Endothelial cell of umbilical vein (primary cell): ENCODE measurements at regions of chr2 and their contacts with region 1.

Region 1: GRCh38 chr2:37389989-37390765 is 45.7 kb downstream of the QPCT start:
- DNase-seq: peak; percentile 88
- H3K4me3 ChIP-seq: no peak overlapping the region
- H3K27ac ChIP-seq: peak overlapping the region; percentile 78
- H3K4me1 ChIP-seq: peaks cover 28% of the 10 kb centered on the region
- H3K27me3 ChIP-seq: no peaks in the 10 kb centered on the region
- CTCF ChIP-seq: no peak
- POLR2A ChIP-seq: peak; percentile 82

Region 2: GRCh38 chr2:36287363-36288275 is 1102.6 kb before region 1 on chr2:
- CTCF ChIA-PET with region 1: no interaction called
- POLR2A ChIA-PET with region 1: no interaction called
- dilution Hi-C with region 1: no loop called
- intact Hi-C with region 1: no loop called
- DNase-seq: peak; percentile 62
- H3K4me3 ChIP-seq: no peak overlapping the region
- H3K27ac ChIP-seq: no peak overlapping the region
- H3K4me1 ChIP-seq: peaks cover 7% of the 10 kb centered on the region
- H3K27me3 ChIP-seq: peaks cover 0 to 4% of the 10 kb centered on the region in 2 experiments
- CTCF ChIP-seq: no peak
- POLR2A ChIP-seq: no peak

Region 3: DNA sequence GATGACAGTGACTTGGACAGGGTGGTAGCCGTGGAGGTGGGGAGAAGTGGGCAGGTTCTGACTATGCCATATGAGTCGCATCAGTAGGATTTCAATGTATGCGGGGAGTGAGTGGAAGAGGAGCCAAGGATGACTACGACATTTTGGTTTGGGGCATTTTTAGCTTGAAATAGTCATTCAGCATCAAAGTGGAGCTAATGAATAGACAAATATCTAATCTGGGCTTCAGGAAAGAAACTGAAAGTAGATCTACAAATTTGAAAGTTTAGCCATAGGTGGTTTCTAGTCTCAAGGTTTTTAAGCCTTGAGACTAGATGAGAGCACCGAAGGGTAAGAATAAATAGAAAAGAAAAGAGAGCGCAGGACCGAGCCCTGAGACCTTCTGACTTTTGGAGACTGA is 850.5 kb before region 1 on chr2:
- CTCF ChIA-PET with region 1: no interaction called
- POLR2A ChIA-PET with region 1: no interaction called
- dilution Hi-C with region 1: no loop called
- intact Hi-C with region 1: no loop called
- DNase-seq: no peak
- H3K4me3 ChIP-seq: no peak overlapping the region
- H3K27ac ChIP-seq: no peak overlapping the region
- H3K4me1 ChIP-seq: peaks cover 70% of the 10 kb centered on the region
- H3K27me3 ChIP-seq: no peaks in the 10 kb centered on the region
- CTCF ChIP-seq: no peak
- POLR2A ChIP-seq: no peak

Region 4: GRCh38 chr2:37324786-37325624 is 65.2 kb before region 1 on chr2 and contains the start of gene PRKD3:
- CTCF ChIA-PET with region 1: interaction called, 6 read pairs
- POLR2A ChIA-PET with region 1: no interaction called
- dilution Hi-C with region 1: no loop called
- intact Hi-C with region 1: loop called (anchors 2 kb)
- DNase-seq: peak; percentile 72
- H3K4me3 ChIP-seq: peak within 1 kb of the TSS; percentile 97 to 99 (median 98)
- H3K27ac ChIP-seq: peak within 1 kb of the TSS; percentile 64
- H3K4me1 ChIP-seq: peaks cover 27% of the 10 kb centered on the region
- H3K27me3 ChIP-seq: no peaks in the 10 kb centered on the region
- CTCF ChIP-seq: no peak
- POLR2A ChIP-seq: no peak
- total RNA-seq, gene PRKD3: 47.3 and 48.4 TPM in 2 replicates

Region 5: DNA sequence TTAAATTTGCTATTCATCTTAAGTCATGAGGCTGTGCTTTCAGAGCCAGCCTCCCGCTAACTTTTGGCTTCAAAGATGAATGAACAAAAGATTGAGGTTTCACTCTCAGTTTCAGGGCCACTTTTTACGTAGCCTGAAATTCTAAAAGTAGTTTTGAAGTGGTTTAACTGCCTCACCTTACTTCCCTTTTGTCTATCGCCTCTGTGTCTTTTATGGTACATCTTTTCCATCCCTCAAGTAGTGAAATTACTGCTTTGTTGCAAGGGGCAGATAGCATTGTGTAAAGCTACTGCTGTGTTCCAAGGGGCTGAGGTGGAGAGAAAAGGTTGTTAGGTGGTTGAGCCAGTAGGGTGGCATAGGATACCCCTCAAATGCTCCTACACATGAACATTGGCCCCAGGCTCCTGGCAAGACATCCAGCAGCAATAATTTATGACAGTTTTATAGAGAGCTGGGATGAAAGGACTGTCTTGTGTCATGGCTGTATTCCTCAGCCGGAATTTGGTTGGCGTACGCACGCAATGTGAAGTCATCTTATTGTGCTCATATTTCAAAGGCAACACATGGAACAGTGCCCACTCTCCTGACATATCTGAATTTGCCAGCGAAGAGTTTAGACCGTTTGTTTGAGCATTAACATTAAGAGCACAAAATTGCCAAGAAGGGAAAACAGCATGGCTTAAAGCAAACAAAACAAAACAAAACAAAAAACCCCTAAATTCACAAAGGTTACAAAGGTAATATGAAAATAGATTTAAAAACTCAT is 13.6 kb before region 1 on chr2:
- CTCF ChIA-PET with region 1: interaction called, 16 read pairs
- POLR2A ChIA-PET with region 1: no interaction called
- dilution Hi-C with region 1: no loop called
- intact Hi-C with region 1: loop called (anchors 1 kb)
- DNase-seq: no peak
- H3K4me3 ChIP-seq: no peak overlapping the region
- H3K27ac ChIP-seq: no peak overlapping the region
- H3K4me1 ChIP-seq: peaks cover 14% of the 10 kb centered on the region
- H3K27me3 ChIP-seq: no peaks in the 10 kb centered on the region
- CTCF ChIP-seq: no peak
- POLR2A ChIP-seq: no peak

Region 6: GRCh38 chr2:37809525-37809924 is 419.3 kb after region 1 on chr2:
- CTCF ChIA-PET with region 1: interaction called, 12 read pairs
- POLR2A ChIA-PET with region 1: no interaction called
- dilution Hi-C with region 1: no loop called
- intact Hi-C with region 1: no loop called
- DNase-seq: peak; percentile 77
- H3K4me3 ChIP-seq: no peak overlapping the region
- H3K27ac ChIP-seq: no peak overlapping the region
- H3K4me1 ChIP-seq: peaks cover 13% of the 10 kb centered on the region
- H3K27me3 ChIP-seq: no peaks in the 10 kb centered on the region
- CTCF ChIP-seq: peak; percentile 42 to 45
- POLR2A ChIP-seq: no peak

Region 7: GRCh38 chr2:37890893-37891495 is 500.8 kb after region 1 on chr2:
- CTCF ChIA-PET with region 1: interaction called, 51 read pairs
- POLR2A ChIA-PET with region 1: no interaction called
- dilution Hi-C with region 1: no loop called
- intact Hi-C with region 1: no loop called
- DNase-seq: peak; percentile 69
- H3K4me3 ChIP-seq: no peak overlapping the region
- H3K27ac ChIP-seq: no peak overlapping the region
- H3K4me1 ChIP-seq: no peaks in the 10 kb centered on the region
- H3K27me3 ChIP-seq: no peaks in the 10 kb centered on the region
- CTCF ChIP-seq: peak; percentile 76 to 79
- POLR2A ChIP-seq: no peak

Region 8: DNA sequence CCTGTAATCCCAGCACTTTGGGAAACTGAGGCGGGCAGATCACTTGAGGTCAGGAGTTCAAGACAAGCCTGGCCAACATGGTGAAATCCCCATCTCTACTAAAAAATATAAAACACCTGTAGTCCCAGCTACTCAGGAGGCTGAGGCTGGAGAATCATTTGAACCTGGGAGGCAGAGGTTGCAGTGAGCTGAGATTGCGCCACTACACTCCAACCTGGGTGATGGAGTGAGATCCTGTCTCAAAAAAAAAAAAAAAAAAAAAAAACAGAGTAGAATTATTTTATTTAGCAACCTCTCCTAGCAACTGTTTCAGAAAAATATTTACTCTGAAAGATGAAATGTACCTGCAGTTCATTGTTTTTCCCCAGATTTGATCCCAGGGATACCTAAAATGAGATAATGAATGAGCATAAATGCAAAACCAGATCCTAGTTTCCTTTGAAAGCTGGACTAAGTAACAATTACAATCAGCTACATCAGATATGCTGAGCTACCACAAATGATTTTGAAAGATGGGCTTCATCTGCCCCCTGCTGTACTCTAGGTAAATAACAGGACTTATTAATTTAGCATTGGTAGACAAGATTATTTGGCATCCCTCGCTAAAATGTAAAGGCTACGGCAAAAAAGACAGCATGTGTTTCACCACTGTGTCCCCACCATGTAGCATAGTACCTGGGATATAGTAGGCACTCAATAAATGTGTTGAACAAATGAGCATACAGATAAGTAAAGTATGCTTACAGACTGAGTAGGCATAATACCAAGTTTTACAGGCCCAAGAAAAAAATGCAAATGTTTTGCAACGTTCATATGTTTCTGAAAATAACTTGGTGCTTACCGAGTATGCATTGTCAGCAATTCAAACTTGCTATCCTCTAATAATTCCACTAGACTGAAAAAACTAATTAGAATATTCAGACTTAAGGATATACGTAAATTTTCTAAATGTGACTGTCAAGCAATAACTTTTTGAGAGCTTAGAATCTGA is 884.4 kb after region 1 on chr2:
- CTCF ChIA-PET with region 1: interaction called, 47 read pairs
- POLR2A ChIA-PET with region 1: interaction called, 9 read pairs
- dilution Hi-C with region 1: no loop called
- intact Hi-C with region 1: loop called (anchors 5 kb)
- DNase-seq: peak; percentile 77
- H3K4me3 ChIP-seq: no peak overlapping the region
- H3K27ac ChIP-seq: no peak overlapping the region
- H3K4me1 ChIP-seq: no peaks in the 10 kb centered on the region
- H3K27me3 ChIP-seq: no peaks in the 10 kb centered on the region
- CTCF ChIP-seq: peak; percentile 34 to 39
- POLR2A ChIP-seq: no peak